ENCODE measurements at regions of chr19 and their contacts with region 1.

Region 1: DNA sequence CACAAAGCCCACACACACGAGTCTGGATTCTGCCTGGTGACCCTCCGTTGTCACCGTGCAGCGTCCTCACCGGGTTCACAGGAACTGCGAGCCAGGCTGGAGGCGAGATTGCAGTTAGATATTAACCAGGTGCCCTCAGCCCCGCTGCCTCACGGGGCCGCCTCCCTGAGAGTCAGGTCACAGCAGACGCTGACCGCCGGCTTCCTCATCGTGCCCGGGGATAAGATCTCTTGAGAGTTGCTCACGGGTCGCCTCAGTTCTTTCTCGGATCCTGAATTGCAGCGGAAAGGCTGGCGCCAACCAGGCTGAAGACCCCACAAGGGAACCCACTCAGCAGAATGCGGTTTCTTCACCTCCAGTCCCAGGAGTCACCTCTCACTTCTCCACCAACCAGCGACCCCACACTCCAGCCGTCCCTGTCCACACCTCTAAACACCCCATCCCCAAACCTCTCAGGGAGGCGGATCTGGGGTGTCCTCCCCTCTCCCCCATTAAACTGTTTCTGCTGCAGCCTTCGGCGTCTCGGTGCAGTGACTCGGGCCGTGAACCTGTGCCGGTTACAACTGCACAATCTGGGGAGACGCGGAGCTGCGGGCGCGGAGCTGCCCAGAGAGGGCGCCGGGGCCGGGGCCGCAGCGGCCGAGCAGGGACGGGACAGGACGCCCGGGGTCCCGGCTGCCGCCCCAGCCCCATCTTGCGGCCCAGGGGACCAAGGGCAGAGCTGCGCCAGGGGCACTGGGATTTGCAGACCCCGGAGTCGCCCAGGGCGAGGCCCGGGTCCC is 591 bp downstream of the ZNF823 start:
- DNase-seq: peak in 4 of 5 donors; percentile 10 to 55 (median 16)
- H3K4me3 ChIP-seq: peak overlapping the region; percentile 58
- H3K4me3 Mint-ChIP-seq: peak overlapping the region; percentile 94 to 99 (median 97)
- H3K27ac ChIP-seq: peak overlapping the region; percentile 60
- H3K27ac Mint-ChIP-seq: peak overlapping the region; percentile 5 to 87 (median 79)
- H3K4me1 ChIP-seq: peaks cover 10% of the 10 kb centered on the region
- H3K4me1 Mint-ChIP-seq: peaks cover 18 to 28% (median 21%) of the 10 kb centered on the region in 3 donors
- H3K27me3 ChIP-seq: no peaks in the 10 kb centered on the region
- H3K27me3 Mint-ChIP-seq: peaks cover 0 to 2% of the 10 kb centered on the region in 2 donors

Region 2: DNA sequence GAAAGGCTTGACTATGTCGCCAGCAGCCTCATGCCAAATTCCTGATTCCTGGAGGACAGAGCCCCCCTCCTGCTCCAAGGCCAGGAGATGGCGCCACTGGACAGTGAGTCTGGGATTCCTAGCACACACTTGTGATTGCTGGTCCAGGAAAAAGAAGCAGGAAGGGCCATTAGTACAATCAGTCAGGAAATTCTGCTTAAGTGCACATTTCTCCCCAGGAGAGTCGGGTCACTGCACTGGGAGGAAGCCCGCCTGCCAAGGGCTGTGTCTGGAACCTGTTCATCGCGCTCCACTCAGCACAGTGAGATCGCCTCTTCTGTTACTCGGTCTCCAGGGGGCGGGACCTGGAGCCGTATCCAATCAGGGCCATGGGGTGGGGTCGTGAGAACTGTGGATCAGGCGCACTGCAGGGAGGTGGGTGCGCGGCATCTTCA is 64.5 kb before region 1 on chr19:
- CTCF ChIA-PET with region 1: no interaction called
- POLR2A ChIA-PET with region 1: no interaction called
- DNase-seq: no peak
- H3K4me3 ChIP-seq: no peak overlapping the region
- H3K4me3 Mint-ChIP-seq: peak overlapping the region in 1 of 7 donors; percentile 32
- H3K27ac ChIP-seq: no peak overlapping the region
- H3K27ac Mint-ChIP-seq: no peak overlapping the region
- H3K4me1 ChIP-seq: no peaks in the 10 kb centered on the region
- H3K4me1 Mint-ChIP-seq: peaks cover 3 to 4% (median 4%) of the 10 kb centered on the region in 3 donors
- H3K27me3 ChIP-seq: peaks cover 7% of the 10 kb centered on the region
- H3K27me3 Mint-ChIP-seq: peaks cover 27 to 37% of the 10 kb centered on the region in 2 donors

Region 3: DNA sequence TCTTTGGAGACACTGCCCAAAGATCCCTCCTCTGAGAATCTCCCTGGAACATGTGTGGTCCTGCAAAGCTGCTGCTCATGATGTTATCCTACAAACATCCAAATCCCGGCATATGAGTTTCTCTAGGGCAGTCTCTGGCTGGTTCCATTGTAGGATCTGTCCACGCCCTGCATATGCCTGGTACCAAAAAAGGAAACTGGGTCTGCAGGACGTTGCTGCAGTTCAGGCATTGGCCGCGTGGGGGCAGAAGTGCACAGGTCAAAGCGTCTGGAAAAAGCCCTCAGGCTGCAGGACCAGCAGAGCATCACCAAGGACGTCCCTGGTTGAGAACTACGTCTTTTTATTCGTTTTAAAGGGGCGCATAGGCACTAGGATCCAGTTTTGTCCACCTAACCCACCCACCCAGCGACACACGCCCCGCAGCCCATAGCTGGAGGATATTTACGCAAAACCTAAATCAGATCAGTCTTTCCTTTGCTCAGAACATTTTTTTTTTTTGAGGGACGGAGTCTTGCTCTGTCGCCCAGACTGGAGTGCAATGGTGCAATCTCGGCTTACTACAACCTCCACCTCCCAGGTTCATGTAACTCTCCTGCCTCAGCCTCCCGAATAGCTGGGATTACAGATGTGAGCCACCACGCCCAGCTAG is 826.0 kb after region 1 on chr19:
- CTCF ChIA-PET with region 1: no interaction called
- POLR2A ChIA-PET with region 1: interaction called, 18 read pairs
- DNase-seq: peak; percentile 80 to 90 (median 86)
- H3K4me3 ChIP-seq: no peak overlapping the region
- H3K4me3 Mint-ChIP-seq: no peak overlapping the region
- H3K27ac ChIP-seq: no peak overlapping the region
- H3K27ac Mint-ChIP-seq: peak overlapping the region in 4 of 8 donors; percentile 2 to 71 (median 44)
- H3K4me1 ChIP-seq: no peaks in the 10 kb centered on the region
- H3K4me1 Mint-ChIP-seq: peaks cover 4 to 6% (median 5%) of the 10 kb centered on the region in 3 donors
- H3K27me3 ChIP-seq: no peaks in the 10 kb centered on the region
- H3K27me3 Mint-ChIP-seq: peaks cover 0 to 3% of the 10 kb centered on the region in 2 donors

Measured in CD8-positive, alpha-beta memory T cell (primary cell).